ACHN (cell line): ENCODE measurements at regions of chr1 and their contacts with region 1.

Region 1: GRCh38 chr1:71533950-71534349 is 453.1 kb upstream of the ZRANB2 start:
- DNase-seq: no peak

Region 2: DNA sequence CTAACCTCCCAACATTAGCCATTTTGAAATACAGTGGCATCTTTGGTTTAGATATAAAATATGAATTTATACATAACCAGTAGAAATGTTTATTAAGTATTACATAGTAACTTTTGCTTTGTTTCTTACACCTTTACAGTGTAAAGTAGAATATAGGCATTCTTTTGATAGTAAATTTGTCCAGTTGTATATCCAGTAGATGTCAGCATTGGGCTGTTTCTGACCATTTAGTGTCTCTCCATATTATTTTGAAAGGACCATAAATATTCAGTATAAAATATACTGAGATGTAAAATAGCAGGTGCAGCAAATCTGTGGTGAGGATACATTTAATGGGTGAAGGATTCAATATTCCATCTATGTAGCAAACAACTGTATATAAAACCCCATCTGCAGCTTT is 337.3 kb before region 1 on chr1:
- in situ Hi-C with region 1: loop called (anchors 25 kb)
- DNase-seq: peak; percentile 27